Activated CD4-positive, alpha-beta T cell treated with anti-CD3 and anti-CD28 coated beads, Interleukin-2, amount 10 ng/mL, durations not matched to agents 24 days and 14 days (primary cell): ENCODE measurements at regions of chr1 and their contacts with region 1.

Region 1: DNA sequence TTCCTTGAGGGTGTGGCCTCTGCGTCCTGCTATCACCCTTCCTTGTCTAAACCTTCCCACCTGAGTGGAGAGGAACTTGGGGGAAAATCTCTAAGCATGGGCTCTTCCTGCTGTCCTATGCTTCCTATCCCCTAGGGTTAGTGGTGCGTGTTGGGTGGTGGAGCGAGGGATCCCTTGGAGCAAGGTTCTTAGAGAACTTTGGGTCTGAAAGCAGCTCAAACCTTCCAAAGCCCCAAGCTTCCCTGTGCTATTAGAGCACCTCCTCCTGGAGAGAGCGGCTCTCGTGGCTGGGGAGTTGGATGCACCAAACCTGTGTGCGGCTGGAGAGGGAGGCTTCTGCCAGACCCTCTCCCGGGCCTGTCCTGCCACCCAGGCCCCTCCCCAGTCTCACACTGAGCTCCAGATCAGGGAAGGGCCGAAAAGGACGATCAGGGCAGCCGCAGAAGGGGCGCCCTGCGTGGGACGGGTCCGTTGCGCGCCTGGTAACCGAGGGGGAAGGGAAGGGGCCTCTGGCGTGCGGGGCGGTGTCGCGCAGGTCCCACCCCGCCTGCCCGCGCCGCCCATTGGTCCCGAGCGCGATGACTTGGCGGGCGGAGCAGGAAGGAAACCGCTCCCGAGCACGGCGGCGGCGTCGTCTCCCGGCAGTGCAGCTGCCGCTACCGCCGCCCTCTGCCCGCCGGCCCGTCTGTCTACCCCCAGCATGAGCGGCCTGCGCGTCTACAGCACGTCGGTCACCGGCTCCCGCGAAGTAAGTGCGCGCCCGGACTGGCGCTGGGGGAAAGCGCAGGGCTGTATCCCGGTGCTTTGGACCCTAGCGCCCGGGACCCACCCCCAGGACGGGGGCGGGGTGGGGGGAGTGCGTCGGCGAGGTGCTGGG is at the start of gene SH3BGRL3:
- DNase-seq: peak; percentile 97
- H3K4me3 Mint-ChIP-seq: peak within 1 kb of the TSS; percentile 96
- H3K27ac Mint-ChIP-seq: peak within 1 kb of the TSS; percentile 97
- H3K4me1 Mint-ChIP-seq: peaks cover 74% of the 10 kb centered on the region
- H3K27me3 Mint-ChIP-seq: no peaks in the 10 kb centered on the region
- total RNA-seq, gene SH3BGRL3: 463 and 474 TPM in 2 replicates

Region 2: DNA sequence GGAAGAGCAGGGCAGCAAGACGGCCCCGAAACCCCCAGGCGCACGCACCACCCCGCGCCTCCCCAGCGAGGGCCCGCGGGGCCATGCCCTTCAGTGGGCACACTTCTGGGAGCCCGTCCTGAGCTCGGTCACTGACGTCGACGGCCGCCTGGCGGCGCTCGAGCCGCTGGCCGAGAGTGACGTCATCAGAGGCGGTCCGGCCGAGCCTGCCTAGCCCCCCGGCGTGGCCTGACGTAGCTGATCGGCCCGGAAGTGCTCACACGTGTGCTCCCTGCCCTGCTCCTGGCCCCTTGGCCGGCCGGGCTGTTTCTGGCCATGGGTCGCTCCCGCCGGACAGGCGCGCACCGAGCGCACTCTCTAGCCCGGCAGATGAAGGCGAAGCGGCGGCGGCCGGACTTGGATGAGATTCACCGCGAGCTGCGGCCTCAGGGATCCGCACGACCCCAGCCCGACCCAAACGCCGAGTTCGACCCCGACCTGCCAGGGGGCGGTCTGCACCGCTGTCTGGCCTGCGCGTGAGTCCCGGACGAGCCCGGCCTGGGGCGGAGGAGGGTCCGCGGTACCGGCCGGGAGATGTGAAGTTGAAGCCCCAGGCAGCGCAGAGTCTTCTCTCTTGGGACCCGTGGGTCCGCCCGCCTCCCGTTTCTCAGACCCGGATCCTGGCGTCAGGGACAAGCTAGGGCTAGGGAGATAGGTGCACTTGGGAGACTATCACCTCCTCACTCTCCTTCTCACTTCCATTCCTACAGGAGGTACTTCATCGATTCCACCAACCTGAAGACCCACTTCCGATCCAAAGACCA is 109.8 kb before region 1 on chr1 and contains the start of gene ZNF593:
- intact Hi-C with region 1: loop called (anchors 5 kb)
- DNase-seq: peak; percentile 97
- H3K4me3 Mint-ChIP-seq: peak within 1 kb of the TSS; percentile 96
- H3K27ac Mint-ChIP-seq: peak within 1 kb of the TSS; percentile 92
- H3K4me1 Mint-ChIP-seq: peaks cover 27% of the 10 kb centered on the region
- H3K27me3 Mint-ChIP-seq: peaks cover 9% of the 10 kb centered on the region
- total RNA-seq, gene ZNF593: 84.0 and 87.1 TPM in 2 replicates

Region 3: DNA sequence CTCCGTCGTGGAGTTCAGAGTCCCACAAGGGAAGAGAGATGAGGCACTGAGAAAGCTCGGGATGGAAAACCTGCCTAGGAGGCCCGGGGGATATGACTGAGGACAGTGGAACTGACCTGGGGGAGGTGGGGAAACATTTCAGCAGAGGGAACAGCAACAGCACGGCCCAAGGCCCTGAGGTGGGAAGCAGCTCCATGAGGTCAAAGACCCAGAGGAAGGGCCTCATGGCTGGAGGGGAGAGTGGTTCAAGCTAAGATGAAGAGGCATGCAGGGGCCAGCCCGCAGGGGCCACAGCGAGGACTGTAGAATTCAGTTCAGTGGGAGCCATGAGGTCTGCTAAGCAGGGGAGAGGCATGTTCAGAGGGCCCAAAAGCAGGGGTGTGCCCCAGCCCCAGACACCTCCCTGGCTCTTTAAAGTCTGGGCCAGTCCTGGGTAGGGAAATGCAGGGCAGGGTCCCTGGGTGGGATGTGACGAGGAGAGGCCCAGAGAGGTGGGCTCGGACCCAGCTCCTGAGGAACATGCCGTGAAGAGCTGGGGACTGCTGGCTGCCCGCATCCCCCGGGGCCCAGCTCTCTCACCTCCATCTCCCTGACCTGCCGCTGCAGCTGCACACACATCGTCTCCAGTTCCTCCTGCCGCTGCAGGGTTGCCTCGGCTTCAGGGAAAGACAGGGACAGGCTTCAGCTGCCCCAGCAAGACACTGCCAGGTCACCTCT is 16.8 kb after region 1 on chr1:
- intact Hi-C with region 1: no loop called
- DNase-seq: no peak
- H3K4me3 Mint-ChIP-seq: no peak overlapping the region
- H3K27ac Mint-ChIP-seq: peak overlapping the region; percentile 66
- H3K4me1 Mint-ChIP-seq: peaks cover 10% of the 10 kb centered on the region
- H3K27me3 Mint-ChIP-seq: no peaks in the 10 kb centered on the region

Region 4: GRCh38 chr1:26378088-26378878 is 98.6 kb after region 1 on chr1:
- intact Hi-C with region 1: loop called (anchors 1 kb)
- DNase-seq: peak; percentile 94
- H3K4me3 Mint-ChIP-seq: peak overlapping the region; percentile 75
- H3K27ac Mint-ChIP-seq: peak overlapping the region; percentile 88
- H3K4me1 Mint-ChIP-seq: peaks cover 57% of the 10 kb centered on the region
- H3K27me3 Mint-ChIP-seq: no peaks in the 10 kb centered on the region

Region 5: GRCh38 chr1:26431979-26432695 is 152.4 kb after region 1 on chr1 and contains the start of gene DHDDS:
- intact Hi-C with region 1: loop called (anchors 5 kb)
- DNase-seq: peak; percentile 100
- H3K4me3 Mint-ChIP-seq: peak within 1 kb of the TSS; percentile 98
- H3K27ac Mint-ChIP-seq: peak within 1 kb of the TSS; percentile 95
- H3K4me1 Mint-ChIP-seq: peaks cover 17% of the 10 kb centered on the region
- H3K27me3 Mint-ChIP-seq: peaks cover 5% of the 10 kb centered on the region
- total RNA-seq, gene DHDDS: 57.0 and 60.2 TPM in 2 replicates

Region 6: DNA sequence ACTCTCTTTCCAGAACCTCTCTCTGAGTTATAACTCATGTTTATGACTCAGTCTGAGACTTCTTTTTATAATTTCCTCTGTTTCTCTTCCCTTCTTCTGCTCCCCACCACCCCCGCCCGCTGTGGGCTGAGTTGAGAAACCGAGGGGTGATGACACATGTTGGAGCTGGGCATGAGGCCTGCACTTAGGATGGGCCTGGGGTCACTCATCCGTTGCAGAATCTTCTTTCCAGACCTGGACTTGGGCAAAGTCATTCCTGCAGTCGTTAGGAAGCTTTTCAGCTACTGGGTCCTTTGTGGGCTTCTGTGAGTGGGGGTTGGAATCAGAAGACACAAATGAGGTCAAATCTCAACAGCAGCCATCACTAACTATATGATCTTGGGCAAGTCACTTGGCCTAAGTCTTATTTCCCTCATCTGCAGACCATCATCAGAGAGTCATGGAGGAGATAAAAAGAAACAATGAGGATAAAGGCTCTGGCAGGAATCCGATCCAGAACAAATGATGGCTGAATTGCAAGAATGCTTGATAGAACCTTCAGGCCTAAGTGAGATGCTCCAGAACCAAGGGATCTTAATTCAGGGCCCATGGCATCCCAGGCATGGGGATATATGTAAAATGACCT is 303.3 kb after region 1 on chr1:
- intact Hi-C with region 1: loop called (anchors 5 kb)
- DNase-seq: peak; percentile 79
- H3K4me3 Mint-ChIP-seq: peak overlapping the region; percentile 47
- H3K27ac Mint-ChIP-seq: peak overlapping the region; percentile 92
- H3K4me1 Mint-ChIP-seq: peaks cover 48% of the 10 kb centered on the region
- H3K27me3 Mint-ChIP-seq: peaks cover 2% of the 10 kb centered on the region